CD4-positive, alpha-beta memory T cell (primary cell): ENCODE measurements at regions of chr2 and their contacts with region 1.

Region 1: DNA sequence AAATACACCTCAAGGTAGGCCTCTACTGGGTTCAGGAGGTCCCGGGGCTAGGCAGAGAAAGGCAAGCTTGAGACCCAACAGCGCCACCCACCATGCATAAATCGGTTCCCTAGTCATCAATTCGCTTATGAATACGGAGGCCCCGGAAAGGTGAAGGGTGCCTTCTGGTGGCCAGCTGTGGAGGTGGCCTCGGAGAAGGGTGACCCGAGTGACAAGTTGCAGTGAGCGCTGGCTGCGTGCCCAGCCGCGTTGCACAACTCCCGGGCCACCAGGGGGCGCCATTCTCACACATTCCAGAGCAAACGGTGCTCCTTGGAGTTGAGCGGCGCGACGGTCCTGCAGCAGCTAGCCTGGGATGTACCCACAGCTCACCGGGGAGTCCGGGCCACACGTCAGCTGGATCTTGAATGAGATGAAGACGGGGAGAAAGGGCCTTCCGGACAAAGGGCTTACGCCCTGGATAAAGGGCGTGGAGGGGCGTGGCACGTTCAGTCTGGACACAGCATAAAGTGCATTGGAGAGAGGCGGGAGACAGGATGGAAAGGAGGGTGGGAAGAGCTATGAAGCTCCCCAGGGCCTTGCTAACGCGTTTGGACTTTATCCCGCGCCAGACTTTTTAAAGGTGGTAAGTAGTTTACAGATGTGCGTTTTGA is 20.4 kb downstream of the TMSB10 start:
- DNase-seq: peak; percentile 96 to 97 (median 97)
- H3K4me3 ChIP-seq: peak overlapping the region; percentile 73 to 86
- H3K4me3 Mint-ChIP-seq: peak overlapping the region; percentile 90 to 99 (median 95)
- H3K27ac ChIP-seq: peak overlapping the region; percentile 62
- H3K27ac Mint-ChIP-seq: peak overlapping the region; percentile 91 to 99 (median 95)
- H3K4me1 ChIP-seq: peaks cover 40% of the 10 kb centered on the region
- H3K4me1 Mint-ChIP-seq: peaks cover 25 to 48% (median 36%) of the 10 kb centered on the region in 4 donors
- H3K27me3 ChIP-seq: no peaks in the 10 kb centered on the region
- H3K27me3 Mint-ChIP-seq: no peaks in the 10 kb centered on the region

Region 2: GRCh38 chr2:84516234-84516986 is 409.4 kb before region 1 on chr2 and contains the start of gene DNAH6:
- CTCF ChIA-PET with region 1: interaction called, 7 read pairs
- POLR2A ChIA-PET with region 1: no interaction called
- intact Hi-C with region 1: loop called (anchors 2 kb)
- DNase-seq: peak; percentile 87 to 94 (median 92)
- H3K4me3 ChIP-seq: peak within 1 kb of the TSS; percentile 27 to 62
- H3K4me3 Mint-ChIP-seq: peak within 1 kb of the TSS; percentile 91 to 96 (median 92)
- H3K27ac ChIP-seq: peak within 1 kb of the TSS; percentile 47
- H3K27ac Mint-ChIP-seq: peak within 1 kb of the TSS; percentile 88 to 99 (median 97)
- H3K4me1 ChIP-seq: peaks cover 15% of the 10 kb centered on the region
- H3K4me1 Mint-ChIP-seq: peaks cover 13 to 27% (median 16%) of the 10 kb centered on the region in 4 donors
- H3K27me3 ChIP-seq: no peaks in the 10 kb centered on the region
- H3K27me3 Mint-ChIP-seq: peaks cover 0 to 3% of the 10 kb centered on the region in 2 donors
- total RNA-seq, gene DNAH6: 1.9 to 2.9 TPM

Region 3: DNA sequence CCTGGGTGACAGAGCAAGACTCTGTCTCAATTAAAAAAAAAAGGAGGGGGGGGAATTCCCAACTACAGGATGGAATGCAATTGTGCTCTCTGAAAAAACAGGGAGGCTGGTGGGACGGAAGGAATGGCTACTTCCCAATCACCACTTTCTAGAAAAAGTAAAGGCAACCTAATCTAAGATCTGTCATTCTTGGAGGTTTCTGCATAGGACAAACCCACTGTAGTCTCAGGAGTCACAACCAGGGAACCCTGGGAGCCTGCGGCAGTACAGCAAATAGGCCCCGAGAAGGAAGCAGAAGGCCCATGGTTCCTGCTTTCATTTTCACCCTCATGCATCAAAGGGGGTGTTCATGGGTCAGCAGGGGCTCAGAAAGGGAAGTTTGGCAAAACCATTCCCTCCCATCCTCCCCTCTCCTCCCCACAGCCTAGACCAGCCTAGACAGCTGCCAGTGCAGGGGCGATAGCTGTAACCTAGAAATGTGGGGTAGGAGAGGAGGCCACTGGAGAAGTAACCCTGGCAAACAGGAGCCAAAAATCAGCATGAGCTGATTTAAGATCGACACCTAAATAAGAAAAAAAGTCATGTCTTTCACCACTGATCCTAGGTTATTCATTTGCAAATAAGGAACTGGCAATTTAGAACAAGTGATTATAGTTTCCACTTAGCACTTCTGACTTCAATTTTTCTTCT is 92.9 kb before region 1 on chr2:
- CTCF ChIA-PET with region 1: interaction called, 18 read pairs
- POLR2A ChIA-PET with region 1: interaction called, 8 read pairs
- intact Hi-C with region 1: no loop called
- DNase-seq: peak in 2 of 5 donors; percentile 15 to 38
- H3K4me3 ChIP-seq: peak overlapping the region in 1 of 2 donors; percentile 39
- H3K4me3 Mint-ChIP-seq: peak overlapping the region; percentile 52 to 84 (median 78)
- H3K27ac ChIP-seq: peak overlapping the region; percentile 59
- H3K27ac Mint-ChIP-seq: peak overlapping the region in 4 of 7 donors; percentile 93 to 96 (median 94)
- H3K4me1 ChIP-seq: peaks cover 87% of the 10 kb centered on the region
- H3K4me1 Mint-ChIP-seq: peaks cover 27 to 49% (median 39%) of the 10 kb centered on the region in 4 donors
- H3K27me3 ChIP-seq: no peaks in the 10 kb centered on the region
- H3K27me3 Mint-ChIP-seq: no peaks in the 10 kb centered on the region

Region 4: GRCh38 chr2:84870306-84870705 is 55.5 kb before region 1 on chr2:
- CTCF ChIA-PET with region 1: interaction called, 64 read pairs
- POLR2A ChIA-PET with region 1: interaction called, 10 read pairs
- intact Hi-C with region 1: loop called (anchors 1 kb)
- DNase-seq: no peak
- H3K4me3 ChIP-seq: no peak overlapping the region
- H3K4me3 Mint-ChIP-seq: peak overlapping the region in 6 of 8 donors; percentile 4 to 74 (median 38)
- H3K27ac ChIP-seq: no peak overlapping the region
- H3K27ac Mint-ChIP-seq: peak overlapping the region; percentile 48 to 93 (median 81)
- H3K4me1 ChIP-seq: peaks cover 75% of the 10 kb centered on the region
- H3K4me1 Mint-ChIP-seq: peaks cover 56 to 87% (median 72%) of the 10 kb centered on the region in 4 donors
- H3K27me3 ChIP-seq: no peaks in the 10 kb centered on the region
- H3K27me3 Mint-ChIP-seq: no peaks in the 10 kb centered on the region

Region 5: GRCh38 chr2:84905181-84906107 is 20.4 kb before region 1 on chr2 and contains the start of gene TMSB10:
- CTCF ChIA-PET with region 1: interaction called, 267 read pairs
- POLR2A ChIA-PET with region 1: interaction called, 221 read pairs
- intact Hi-C with region 1: loop called (anchors 1 kb)
- DNase-seq: peak; percentile 88 to 95 (median 92)
- H3K4me3 ChIP-seq: peak within 1 kb of the TSS; percentile 69 to 92
- H3K4me3 Mint-ChIP-seq: peak within 1 kb of the TSS; percentile 90 to 97 (median 96)
- H3K27ac ChIP-seq: peak within 1 kb of the TSS; percentile 71
- H3K27ac Mint-ChIP-seq: peak within 1 kb of the TSS; percentile 90 to 97 (median 95)
- H3K4me1 ChIP-seq: peaks cover 34% of the 10 kb centered on the region
- H3K4me1 Mint-ChIP-seq: peaks cover 46 to 74% (median 52%) of the 10 kb centered on the region in 4 donors
- H3K27me3 ChIP-seq: no peaks in the 10 kb centered on the region
- H3K27me3 Mint-ChIP-seq: no peaks in the 10 kb centered on the region
- total RNA-seq, gene TMSB10: 1,218 to 1,245 TPM

Region 6: DNA sequence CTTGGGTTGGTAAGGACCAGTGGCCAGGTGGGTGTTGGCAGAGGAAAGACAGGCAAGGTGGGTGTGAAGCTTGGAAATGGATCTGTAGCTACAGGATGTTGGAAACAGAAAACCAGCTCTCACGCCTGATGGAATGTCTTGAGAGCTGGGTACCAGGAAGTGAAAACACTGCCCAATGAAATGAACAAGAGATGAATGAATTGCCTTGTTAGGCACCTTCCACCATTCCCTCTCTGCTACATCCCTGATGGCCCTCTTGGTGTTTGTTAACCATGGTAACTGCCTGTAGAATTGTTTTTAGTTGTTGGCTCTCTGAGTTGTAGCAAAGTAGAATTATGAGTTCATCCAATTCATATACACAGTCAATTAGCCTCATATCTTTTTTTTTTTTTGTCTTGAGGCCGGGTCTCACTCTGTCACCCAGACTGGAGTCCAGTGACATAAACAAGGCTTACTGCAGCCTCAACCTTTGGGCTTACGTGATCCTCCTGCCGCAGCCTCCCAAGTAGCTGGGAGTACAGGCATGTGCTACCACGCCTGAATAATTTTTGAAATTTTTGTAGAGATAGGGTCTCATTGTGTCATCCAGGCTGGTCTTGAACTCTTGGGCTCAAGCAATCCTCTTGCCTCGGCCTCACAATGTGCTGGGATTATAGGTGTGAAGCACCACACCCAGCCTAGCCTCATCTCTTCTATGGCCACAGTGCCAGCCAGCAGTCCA is 54.6 kb after region 1 on chr2:
- CTCF ChIA-PET with region 1: interaction called, 12 read pairs
- POLR2A ChIA-PET with region 1: interaction called, 4 read pairs
- intact Hi-C with region 1: no loop called
- DNase-seq: no peak
- H3K4me3 ChIP-seq: no peak overlapping the region
- H3K4me3 Mint-ChIP-seq: peak overlapping the region in 7 of 8 donors; percentile 3 to 72 (median 38)
- H3K27ac ChIP-seq: no peak overlapping the region
- H3K27ac Mint-ChIP-seq: peak overlapping the region; percentile 10 to 87 (median 35)
- H3K4me1 ChIP-seq: peaks cover 84% of the 10 kb centered on the region
- H3K4me1 Mint-ChIP-seq: peaks cover 43 to 79% (median 60%) of the 10 kb centered on the region in 4 donors
- H3K27me3 ChIP-seq: no peaks in the 10 kb centered on the region
- H3K27me3 Mint-ChIP-seq: no peaks in the 10 kb centered on the region

Region 7: GRCh38 chr2:85288244-85288725 is 362.4 kb after region 1 on chr2:
- CTCF ChIA-PET with region 1: interaction called, 7 read pairs
- POLR2A ChIA-PET with region 1: interaction called, 6 read pairs
- intact Hi-C with region 1: loop called (anchors 1 kb)
- DNase-seq: no peak
- H3K4me3 ChIP-seq: no peak overlapping the region
- H3K4me3 Mint-ChIP-seq: no peak overlapping the region
- H3K27ac ChIP-seq: no peak overlapping the region
- H3K27ac Mint-ChIP-seq: no peak overlapping the region
- H3K4me1 ChIP-seq: peaks cover 10% of the 10 kb centered on the region
- H3K4me1 Mint-ChIP-seq: peaks cover 16 to 28% (median 23%) of the 10 kb centered on the region in 4 donors
- H3K27me3 ChIP-seq: no peaks in the 10 kb centered on the region
- H3K27me3 Mint-ChIP-seq: no peaks in the 10 kb centered on the region

Region 8: DNA sequence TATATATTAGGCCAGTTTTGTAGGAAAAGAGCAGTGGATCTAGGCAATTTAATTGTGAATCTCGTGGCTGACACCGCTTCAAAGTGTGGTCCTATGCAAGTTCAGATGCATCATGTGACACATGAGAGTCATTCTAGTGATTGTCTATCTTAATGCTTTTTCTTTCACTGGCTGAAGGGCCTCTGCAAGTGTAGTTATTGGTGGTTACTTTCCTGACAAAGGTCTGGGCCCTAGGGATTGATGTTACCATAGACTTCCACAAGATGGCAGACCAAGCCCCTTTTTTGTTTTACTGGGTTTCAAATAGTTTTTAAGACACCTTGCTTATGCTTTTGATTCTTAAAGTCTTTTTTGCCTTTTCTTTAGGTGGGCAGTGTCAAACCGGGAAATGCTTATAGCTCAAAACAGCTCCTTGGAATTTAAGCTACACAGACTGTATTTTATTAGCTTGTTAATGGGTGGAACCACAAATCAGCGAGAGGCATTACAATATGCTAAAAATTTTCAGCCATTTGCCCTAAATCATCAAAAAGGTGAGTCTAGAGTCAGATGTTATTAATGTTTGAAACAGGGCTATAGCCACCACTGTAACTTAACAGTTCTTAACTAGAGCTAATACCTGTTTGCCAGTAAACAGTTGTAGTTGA is 1838.9 kb after region 1 on chr2:
- CTCF ChIA-PET with region 1: no interaction called
- POLR2A ChIA-PET with region 1: no interaction called
- intact Hi-C with region 1: no loop called
- DNase-seq: peak in 4 of 5 donors; percentile 17 to 27 (median 23)
- H3K4me3 ChIP-seq: no peak overlapping the region
- H3K4me3 Mint-ChIP-seq: no peak overlapping the region
- H3K27ac ChIP-seq: no peak overlapping the region
- H3K27ac Mint-ChIP-seq: peak overlapping the region in 4 of 7 donors; percentile 0 to 43 (median 28)
- H3K4me1 ChIP-seq: no peaks in the 10 kb centered on the region
- H3K4me1 Mint-ChIP-seq: peaks cover 12 to 19% (median 13%) of the 10 kb centered on the region in 4 donors
- H3K27me3 ChIP-seq: no peaks in the 10 kb centered on the region
- H3K27me3 Mint-ChIP-seq: no peaks in the 10 kb centered on the region